ENCODE measurements at regions of chrX and their contacts with region 1.

Region 1: GRCh38 chrX:56729152-56729850 is at the start of gene NBDY:
- DNase-seq: peak; percentile 13
- CTCF ChIP-seq: no peak

Region 2: GRCh38 chrX:55731826-55732225 is 997.5 kb before region 1 on chrX:
- in situ Hi-C with region 1: loop called (anchors 25 kb)
- DNase-seq: no peak
- CTCF ChIP-seq: no peak

Region 3: GRCh38 chrX:56107273-56107672 is 622.0 kb before region 1 on chrX:
- in situ Hi-C with region 1: no loop called
- DNase-seq: no peak
- CTCF ChIP-seq: no peak

Region 4: DNA sequence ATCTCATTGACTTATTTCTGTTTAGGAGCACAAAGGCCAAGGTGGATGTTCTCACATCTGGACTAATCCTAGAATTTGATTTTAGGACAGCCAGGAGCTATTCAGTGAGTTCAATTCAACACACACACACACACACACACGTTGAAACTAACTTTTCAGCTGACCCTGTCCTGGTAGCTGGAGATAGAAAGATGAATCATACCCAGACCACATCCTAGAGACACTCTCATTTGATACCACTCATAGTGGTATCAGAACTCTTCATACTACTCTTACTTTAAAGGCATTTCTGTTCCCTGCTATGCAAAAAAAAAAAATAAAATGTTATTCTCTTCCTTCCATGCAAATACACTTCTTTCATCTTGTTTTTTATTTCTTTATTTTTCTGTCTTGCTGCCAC is 460.4 kb before region 1 on chrX:
- in situ Hi-C with region 1: loop called (anchors 25 kb)
- DNase-seq: peak; percentile 11
- CTCF ChIP-seq: no peak

Region 5: GRCh38 chrX:56563231-56564161 is 165.8 kb before region 1 on chrX and contains the start of gene UBQLN2:
- in situ Hi-C with region 1: loop called (anchors 25 kb)
- DNase-seq: peak; percentile 56
- CTCF ChIP-seq: no peak